Sigmoid colon (tissue), 7 donors: ENCODE measurements at regions of chr3 and their contacts with region 1.

Region 1: DNA sequence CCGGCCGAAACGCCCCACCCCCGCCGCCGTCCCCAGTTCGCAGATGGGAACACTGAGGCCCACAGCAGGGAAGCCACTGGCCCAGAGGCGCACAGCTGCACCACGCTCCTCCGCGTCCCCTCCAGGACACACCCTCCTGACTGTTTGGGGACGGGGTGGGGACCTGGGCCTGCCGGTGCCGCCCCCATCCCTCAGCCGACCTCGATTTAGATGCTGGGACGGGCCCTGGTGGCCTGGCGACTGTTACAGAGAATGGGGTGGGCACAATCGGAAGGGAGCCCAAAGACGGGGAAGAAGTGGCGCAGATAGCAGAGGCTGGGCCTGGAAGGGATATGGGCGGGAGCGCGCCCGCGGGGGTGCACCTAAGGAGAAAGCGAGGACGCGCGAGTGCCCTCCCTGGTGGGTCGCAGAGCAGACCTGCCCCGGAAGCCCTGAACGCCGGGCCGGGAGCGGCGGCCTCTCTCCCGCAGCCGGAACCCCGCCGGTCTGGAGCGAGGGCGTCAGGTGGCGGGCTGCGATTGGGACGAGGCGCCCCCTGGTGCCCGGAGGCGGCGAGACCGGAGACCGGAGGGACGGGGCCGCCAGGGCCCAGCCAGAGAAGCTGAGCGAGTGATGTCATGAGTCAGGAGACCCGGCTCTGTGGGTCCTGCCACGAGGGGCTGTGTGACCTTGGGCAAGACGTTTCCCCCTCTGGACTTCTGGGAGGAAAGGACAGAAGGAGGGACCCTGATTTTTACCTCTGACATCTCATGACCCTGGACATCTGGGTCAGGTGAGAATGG is 78.4 kb downstream of the IQSEC1 start:
- DNase-seq: peak; percentile 94
- H3K4me3 ChIP-seq: peak overlapping the region; percentile 52 to 99 (median 84)
- H3K27ac ChIP-seq: peak overlapping the region; percentile 83 to 93 (median 92)
- H3K4me1 ChIP-seq: peaks cover 0 to 26% (median 15%) of the 10 kb centered on the region in 4 donors
- H3K27me3 ChIP-seq: no peaks in the 10 kb centered on the region
- CTCF ChIP-seq: peak; percentile 85 to 93 (median 91)
- EP300 ChIP-seq: peak in 1 of 4 donors; percentile 12
- POLR2A ChIP-seq: peak; percentile 55 to 77

Region 2: GRCh38 chr3:12868039-12869034 is 126.5 kb before region 1 on chr3:
- intact Hi-C with region 1: loop called (anchors 2 kb)
- DNase-seq: peak; percentile 92
- H3K4me3 ChIP-seq: peak overlapping the region in 2 of 4 donors; percentile 28 to 32
- H3K27ac ChIP-seq: peak overlapping the region in 1 of 4 donors; percentile 39
- H3K4me1 ChIP-seq: peaks cover 0 to 14% (median 13%) of the 10 kb centered on the region in 4 donors
- H3K27me3 ChIP-seq: no peaks in the 10 kb centered on the region
- CTCF ChIP-seq: peak; percentile 87 to 92 (median 90)
- EP300 ChIP-seq: no peak
- POLR2A ChIP-seq: no peak

Region 3: GRCh38 chr3:12954891-12955650 is 39.7 kb before region 1 on chr3:
- intact Hi-C with region 1: loop called (anchors 2 kb)
- DNase-seq: peak; percentile 94
- H3K4me3 ChIP-seq: no peak overlapping the region
- H3K27ac ChIP-seq: peak overlapping the region; percentile 70 to 78 (median 74)
- H3K4me1 ChIP-seq: peaks cover 0 to 62% (median 53%) of the 10 kb centered on the region in 4 donors
- H3K27me3 ChIP-seq: no peaks in the 10 kb centered on the region
- CTCF ChIP-seq: no peak
- EP300 ChIP-seq: no peak
- POLR2A ChIP-seq: no peak

Region 4: GRCh38 chr3:13479581-13480339 is 485.0 kb after region 1 on chr3 and contains the start of gene HDAC11:
- intact Hi-C with region 1: loop called (anchors 10 kb)
- DNase-seq: peak; percentile 99
- H3K4me3 ChIP-seq: peak within 1 kb of the TSS; percentile 68 to 90 (median 80)
- H3K27ac ChIP-seq: peak within 1 kb of the TSS; percentile 94 to 97 (median 94)
- H3K4me1 ChIP-seq: peaks cover 0 to 24% (median 16%) of the 10 kb centered on the region in 4 donors
- H3K27me3 ChIP-seq: no peaks in the 10 kb centered on the region
- CTCF ChIP-seq: peak in 2 of 4 experiments; percentile 23 to 58
- EP300 ChIP-seq: no peak
- POLR2A ChIP-seq: peak; percentile 89 to 93
- total RNA-seq, gene HDAC11: 15.5 to 17.2 (median 16.7) TPM